Endothelial cell of umbilical vein (primary cell): ENCODE measurements at regions of chr17 and their contacts with region 1.

Region 1: GRCh38 chr17:37174205-37174604 is 201.6 kb upstream of the C17orf78 start:
- DNase-seq: peak; percentile 9
- H3K4me3 ChIP-seq: no peak overlapping the region
- H3K27ac ChIP-seq: no peak overlapping the region
- H3K4me1 ChIP-seq: peaks cover 7% of the 10 kb centered on the region
- H3K27me3 ChIP-seq: no peaks in the 10 kb centered on the region
- CTCF ChIP-seq: peak; percentile 9 to 10
- POLR2A ChIP-seq: no peak

Region 2: GRCh38 chr17:37162800-37163199 is 11.4 kb before region 1 on chr17:
- CTCF ChIA-PET with region 1: interaction called, 19 read pairs
- POLR2A ChIA-PET with region 1: no interaction called
- dilution Hi-C with region 1: no loop called
- intact Hi-C with region 1: no loop called
- DNase-seq: no peak
- H3K4me3 ChIP-seq: no peak overlapping the region
- H3K27ac ChIP-seq: no peak overlapping the region
- H3K4me1 ChIP-seq: no peaks in the 10 kb centered on the region
- H3K27me3 ChIP-seq: no peaks in the 10 kb centered on the region
- CTCF ChIP-seq: no peak
- POLR2A ChIP-seq: no peak

Region 3: DNA sequence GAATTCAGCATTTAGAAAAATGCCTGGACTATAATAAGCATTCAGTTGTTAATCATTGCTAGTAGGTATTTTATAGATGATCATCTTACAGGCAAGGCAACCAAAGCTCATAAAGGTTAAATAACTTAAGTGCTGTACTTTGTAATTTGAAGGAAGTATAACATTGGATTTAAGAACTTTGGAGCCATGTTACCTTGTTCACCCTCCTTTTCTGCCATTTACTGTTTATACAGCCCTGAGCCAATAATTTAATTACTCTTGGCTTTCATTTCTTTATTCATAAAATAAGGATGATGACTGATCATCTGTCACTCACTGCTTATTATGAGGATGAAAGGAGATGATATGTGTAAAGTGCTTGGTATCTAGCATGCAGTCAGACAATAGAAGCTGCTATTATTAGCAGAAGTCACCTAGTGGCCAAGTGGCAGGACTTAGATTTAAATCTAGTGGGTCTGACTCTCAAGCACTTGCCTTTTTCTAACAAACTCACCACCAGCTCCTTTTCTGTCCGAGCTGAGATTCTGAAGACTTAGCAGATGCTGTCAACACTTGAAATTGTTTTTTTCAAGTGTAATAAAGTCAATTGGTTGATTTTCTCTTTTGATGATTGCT is 487.3 kb after region 1 on chr17:
- CTCF ChIA-PET with region 1: no interaction called
- POLR2A ChIA-PET with region 1: no interaction called
- dilution Hi-C with region 1: no loop called
- intact Hi-C with region 1: no loop called
- DNase-seq: no peak
- H3K4me3 ChIP-seq: no peak overlapping the region
- H3K27ac ChIP-seq: no peak overlapping the region
- H3K4me1 ChIP-seq: no peaks in the 10 kb centered on the region
- H3K27me3 ChIP-seq: no peaks in the 10 kb centered on the region
- CTCF ChIP-seq: peak in 1 of 2 donors; percentile 7
- POLR2A ChIP-seq: no peak